Common myeloid progenitor, CD34-positive (primary cell): ENCODE measurements at regions of chr16 and their contacts with region 1.

Region 1: DNA sequence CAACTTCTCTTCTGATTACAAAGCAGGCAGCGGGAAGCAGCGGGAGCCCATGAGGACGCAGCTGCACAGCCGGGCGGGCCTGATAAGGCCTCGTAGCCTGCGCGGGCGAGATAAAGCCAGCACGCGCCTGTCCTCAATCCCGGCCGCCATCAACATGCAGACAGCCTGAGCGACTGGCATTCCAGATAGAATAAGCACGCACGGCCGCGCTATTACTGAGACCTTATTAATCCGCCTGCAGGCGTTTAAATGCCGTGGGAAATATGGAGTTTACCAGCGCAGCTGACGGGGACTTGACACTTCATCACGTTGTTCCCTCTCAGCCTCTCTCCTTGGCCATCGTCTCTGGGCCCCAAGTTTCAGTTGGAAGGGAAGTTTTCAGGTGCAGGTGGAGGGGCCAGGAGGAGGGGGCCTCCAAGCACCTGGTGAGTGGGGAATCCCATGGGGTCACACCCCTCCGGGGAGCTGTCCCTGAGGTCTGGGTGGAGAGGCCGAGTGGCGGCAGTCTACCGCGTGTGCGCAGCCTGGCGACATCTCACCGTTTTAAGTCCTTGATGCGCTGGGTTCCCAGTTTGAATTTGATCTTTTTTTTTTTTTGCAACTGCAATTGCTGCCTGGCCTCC is 27.3 kb upstream of the CBFA2T3 start:
- DNase-seq: peak; percentile 97 to 99 (median 98)
- H3K4me3 ChIP-seq: peak overlapping the region in 3 of 7 experiments; percentile 36 to 61 (median 53)
- H3K27ac ChIP-seq: peak overlapping the region; percentile 33 to 75
- H3K4me1 ChIP-seq: peaks cover 0 to 34% (median 23%) of the 10 kb centered on the region in 4 experiments
- H3K27me3 ChIP-seq: no peaks in the 10 kb centered on the region

Region 2: DNA sequence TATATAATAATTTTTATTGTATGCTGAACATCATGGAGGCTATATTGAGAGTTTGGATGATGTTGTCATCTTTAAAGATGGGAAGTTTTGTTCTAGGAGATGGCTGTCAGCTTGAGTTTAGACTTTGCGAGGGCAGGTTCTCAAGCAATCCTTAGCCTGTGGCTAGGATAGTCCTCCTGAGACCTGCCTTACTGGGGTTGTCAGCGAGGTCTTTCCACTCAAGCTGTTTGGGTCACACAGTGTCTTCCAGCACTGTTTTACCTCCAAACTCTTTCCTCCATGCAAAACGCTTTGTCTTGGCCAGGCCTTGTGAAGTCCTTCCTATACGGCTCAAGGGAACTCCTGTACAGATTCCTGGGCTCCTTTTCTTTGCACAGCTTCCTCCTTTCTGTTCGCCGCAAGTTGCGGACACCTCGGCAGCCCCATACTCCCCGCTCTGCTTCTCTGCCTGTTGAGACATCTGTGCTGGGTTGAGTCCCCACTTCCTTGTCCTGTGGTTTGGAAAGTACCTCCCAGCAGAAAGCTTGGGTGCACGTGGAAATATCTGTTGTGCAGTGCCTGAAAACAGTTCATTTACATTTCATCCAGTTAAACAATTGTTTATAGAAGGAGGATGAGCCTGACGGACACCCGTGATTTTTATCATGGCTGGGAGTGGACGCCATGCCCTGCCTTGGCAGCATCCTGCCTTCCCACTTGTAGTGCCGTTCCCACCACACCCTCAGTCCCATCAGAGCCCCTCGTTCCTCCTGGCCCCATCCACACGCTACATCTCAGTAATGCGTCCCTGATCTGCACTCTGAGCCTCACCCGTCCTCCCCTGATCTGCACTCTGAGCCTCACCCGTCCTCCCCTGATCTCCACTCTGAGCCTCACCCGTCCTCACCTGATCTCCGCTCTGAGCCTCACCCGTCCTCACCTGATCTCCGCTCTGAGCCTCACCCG is 27.7 kb after region 1 on chr16:
- CTCF ChIA-PET with region 1: interaction called, 3 read pairs
- POLR2A ChIA-PET with region 1: interaction called, 10 read pairs
- DNase-seq: peak; percentile 92 to 99 (median 97)
- H3K4me3 ChIP-seq: peak overlapping the region in 3 of 7 experiments; percentile 17 to 26 (median 17)
- H3K27ac ChIP-seq: no peak overlapping the region
- H3K4me1 ChIP-seq: peaks cover 6 to 22% (median 19%) of the 10 kb centered on the region in 4 experiments
- H3K27me3 ChIP-seq: no peaks in the 10 kb centered on the region